Sigmoid colon (tissue), 7 donors: ENCODE measurements at regions of chr20 and their contacts with region 1.

Region 1: DNA sequence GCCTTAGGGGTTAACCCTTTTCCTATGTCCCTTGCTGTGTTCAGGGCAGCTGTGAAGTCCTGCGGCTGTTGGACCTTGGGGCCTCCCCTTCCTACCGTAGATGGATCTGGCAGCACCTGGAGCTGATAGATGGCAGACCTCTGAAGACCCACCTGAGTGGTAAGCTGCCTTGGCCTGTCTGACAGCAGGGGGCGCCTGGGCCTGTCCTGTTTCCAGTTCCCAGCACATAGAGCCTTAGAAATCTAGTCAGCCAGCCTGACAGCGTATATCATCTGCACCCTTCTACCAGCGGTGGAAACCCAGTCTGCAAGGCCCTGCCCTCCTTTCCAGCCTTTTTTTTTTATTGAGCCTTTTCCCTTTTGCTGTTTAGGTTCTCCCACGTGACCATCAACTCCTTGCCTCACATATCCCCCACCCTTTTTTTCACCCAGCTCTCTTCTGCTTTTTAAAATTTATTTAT is 26.6 kb downstream of the CNBD2 start:
- DNase-seq: peak; percentile 87
- H3K4me3 ChIP-seq: no peak overlapping the region
- H3K27ac ChIP-seq: no peak overlapping the region
- H3K4me1 ChIP-seq: no peaks in the 10 kb centered on the region
- H3K27me3 ChIP-seq: no peaks in the 10 kb centered on the region
- CTCF ChIP-seq: peak; percentile 68 to 82 (median 78)
- EP300 ChIP-seq: no peak
- POLR2A ChIP-seq: no peak

Region 2: DNA sequence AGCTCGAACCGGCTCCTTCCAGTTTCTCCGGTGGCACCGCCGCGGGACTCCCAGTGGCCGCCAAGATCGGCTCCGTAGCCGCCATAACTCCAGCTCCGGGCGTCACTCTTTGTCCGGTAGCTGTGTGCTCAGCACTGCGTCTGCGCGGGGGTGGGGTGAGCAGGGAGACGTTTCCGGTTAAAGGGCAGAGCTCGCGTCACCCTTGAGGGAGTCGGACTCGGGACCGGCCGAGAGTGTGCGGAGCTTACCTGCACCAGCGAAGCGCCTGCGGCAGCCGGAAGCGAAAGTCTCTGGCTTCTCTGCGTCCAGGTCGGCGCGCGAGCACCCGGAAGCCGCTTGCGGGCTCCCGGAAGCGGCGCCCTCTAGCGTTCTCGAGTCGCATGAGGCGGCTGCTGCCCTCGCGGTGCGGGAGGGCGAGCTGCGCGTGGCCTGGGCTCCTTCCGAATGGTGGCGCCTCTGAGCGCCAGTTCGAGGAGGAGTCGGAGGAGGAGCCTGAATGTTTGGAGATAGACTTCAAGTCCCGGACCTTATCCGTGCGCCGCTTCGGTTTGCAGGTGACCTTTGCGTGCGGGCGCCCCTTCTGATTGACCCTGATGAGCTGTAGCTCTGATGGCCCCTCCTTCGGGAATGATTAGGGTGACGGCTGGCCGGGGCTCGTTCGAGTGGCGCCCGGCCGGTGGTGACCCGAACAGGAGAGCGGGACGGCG is 40.7 kb before region 1 on chr20 and contains the start of gene SCAND1:
- intact Hi-C with region 1: no loop called
- DNase-seq: peak; percentile 97
- H3K4me3 ChIP-seq: peak within 1 kb of the TSS; percentile 85 to 96 (median 92)
- H3K27ac ChIP-seq: peak within 1 kb of the TSS; percentile 97 to 98 (median 98)
- H3K4me1 ChIP-seq: peaks cover 0 to 31% (median 24%) of the 10 kb centered on the region in 4 donors
- H3K27me3 ChIP-seq: no peaks in the 10 kb centered on the region
- CTCF ChIP-seq: peak; percentile 66 to 95 (median 88)
- EP300 ChIP-seq: no peak
- POLR2A ChIP-seq: peak; percentile 67 to 77
- total RNA-seq, gene SCAND1: 61.2 to 83.1 (median 70.8) TPM

Region 3: DNA sequence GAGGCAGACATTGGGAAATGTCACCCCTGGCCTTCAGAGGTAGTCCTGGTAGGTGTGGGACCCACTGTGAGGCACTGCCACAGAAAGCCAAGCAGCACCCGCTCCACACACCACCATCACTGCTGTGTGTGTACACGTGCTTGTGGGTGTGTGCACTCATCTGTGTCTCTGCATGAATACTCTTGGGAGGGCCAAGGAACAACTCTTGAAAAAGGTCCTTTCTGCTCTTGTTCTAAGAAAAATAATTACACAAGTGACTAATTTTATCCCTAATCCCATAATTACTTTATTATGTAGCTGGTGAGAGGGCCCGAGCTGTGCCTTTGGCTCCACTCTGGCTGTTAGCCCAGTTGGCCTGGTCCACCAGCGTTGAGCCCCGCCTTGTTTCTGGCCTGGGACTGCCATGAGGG is 137.8 kb after region 1 on chr20:
- intact Hi-C with region 1: loop called (anchors 1 kb)
- DNase-seq: no peak
- H3K4me3 ChIP-seq: no peak overlapping the region
- H3K27ac ChIP-seq: no peak overlapping the region
- H3K4me1 ChIP-seq: no peaks in the 10 kb centered on the region
- H3K27me3 ChIP-seq: no peaks in the 10 kb centered on the region
- CTCF ChIP-seq: no peak
- EP300 ChIP-seq: no peak
- POLR2A ChIP-seq: no peak

Region 4: GRCh38 chr20:36519944-36520343 is 524.9 kb after region 1 on chr20:
- intact Hi-C with region 1: no loop called
- DNase-seq: no peak
- H3K4me3 ChIP-seq: no peak overlapping the region
- H3K27ac ChIP-seq: peak overlapping the region in 2 of 4 donors; percentile 3 to 23
- H3K4me1 ChIP-seq: peaks cover 0 to 56% (median 36%) of the 10 kb centered on the region in 4 donors
- H3K27me3 ChIP-seq: no peaks in the 10 kb centered on the region
- CTCF ChIP-seq: no peak
- EP300 ChIP-seq: no peak
- POLR2A ChIP-seq: no peak